ENCODE measurements at regions of chr3 and their contacts with region 1.

Region 1: DNA sequence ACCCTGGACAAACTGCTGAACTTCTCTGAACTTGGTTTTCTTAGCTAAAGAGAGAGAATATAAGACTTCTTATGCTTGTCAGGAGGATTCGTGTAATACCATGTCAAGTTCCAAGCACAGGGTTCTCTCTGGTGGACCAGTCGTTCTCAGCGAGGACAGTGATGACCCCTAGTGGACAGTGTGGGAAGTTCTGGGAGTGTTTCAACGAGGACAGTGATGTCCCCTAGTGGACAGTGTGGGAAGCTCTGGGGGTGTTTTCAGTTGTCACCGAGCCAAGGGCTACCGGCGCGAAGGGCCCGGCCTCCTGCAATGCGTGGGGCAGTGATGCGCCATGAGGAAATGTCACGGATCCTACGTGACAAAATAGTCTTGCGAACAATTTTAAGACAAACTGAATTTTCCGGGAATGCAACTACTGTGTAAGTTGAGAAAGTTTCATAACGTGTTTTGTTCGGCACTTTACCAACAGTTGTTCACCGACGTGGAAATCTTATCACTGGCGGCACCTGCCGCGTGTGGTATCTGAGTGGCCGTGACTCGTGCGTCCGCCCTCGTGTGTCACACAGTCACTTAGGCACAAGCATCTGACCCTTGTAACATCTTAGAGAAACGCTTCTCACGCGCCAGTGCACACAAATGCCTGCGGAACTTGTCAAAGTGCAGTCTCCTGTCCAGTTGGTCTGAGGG is 39.3 kb upstream of the MUC4 start:
- DNase-seq: peak; percentile 83
- H3K4me3 Mint-ChIP-seq: no peak overlapping the region
- H3K27ac Mint-ChIP-seq: peak overlapping the region; percentile 41
- H3K4me1 Mint-ChIP-seq: no peaks in the 10 kb centered on the region
- H3K27me3 Mint-ChIP-seq: peaks cover 5% of the 10 kb centered on the region

Region 2: DNA sequence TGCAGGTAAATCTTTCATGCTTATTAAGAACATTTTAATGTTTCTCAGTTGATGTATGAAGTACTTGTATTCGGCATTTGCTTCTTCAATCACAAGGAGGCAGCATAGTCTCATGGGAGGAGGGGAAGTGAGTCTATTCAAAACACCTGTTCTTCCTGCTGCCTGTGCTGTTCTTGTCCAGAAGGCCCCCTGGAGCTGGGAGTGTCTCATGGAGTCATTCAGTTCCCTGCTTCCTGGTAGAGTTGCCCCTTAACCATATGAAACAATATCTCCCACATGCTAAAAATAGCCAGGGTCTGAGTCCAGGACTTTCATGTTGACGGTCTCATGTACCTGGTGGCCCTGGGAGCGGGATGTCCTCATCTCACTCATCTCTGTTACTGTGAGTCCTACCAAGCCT is 292.4 kb before region 1 on chr3:
- intact Hi-C with region 1: loop called (anchors 2 kb)
- DNase-seq: no peak
- H3K4me3 Mint-ChIP-seq: no peak overlapping the region
- H3K27ac Mint-ChIP-seq: no peak overlapping the region
- H3K4me1 Mint-ChIP-seq: peaks cover 23% of the 10 kb centered on the region
- H3K27me3 Mint-ChIP-seq: peaks cover 3% of the 10 kb centered on the region

Region 3: DNA sequence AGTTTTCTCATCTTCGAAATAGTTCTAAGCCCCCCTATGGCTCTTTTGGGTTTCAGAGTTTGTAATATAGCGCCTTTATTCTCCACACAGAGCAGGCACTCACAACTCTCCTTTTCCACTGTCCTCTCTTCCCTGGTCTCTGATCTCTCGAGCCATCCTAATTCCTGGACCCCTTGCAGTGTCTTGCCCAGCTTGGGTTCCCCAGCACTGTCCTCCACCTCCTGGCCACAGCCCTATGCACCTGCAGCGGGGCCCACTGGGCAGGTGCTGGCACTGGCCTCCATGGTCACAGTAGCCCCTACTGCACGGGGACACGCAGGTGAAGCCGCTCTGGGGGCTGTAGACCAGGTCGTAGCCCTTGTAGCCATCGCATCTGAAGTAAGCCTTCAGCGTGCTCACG is 102.3 kb before region 1 on chr3:
- intact Hi-C with region 1: loop called (anchors 2 kb)
- DNase-seq: no peak
- H3K4me3 Mint-ChIP-seq: peak overlapping the region; percentile 1
- H3K27ac Mint-ChIP-seq: peak overlapping the region; percentile 36
- H3K4me1 Mint-ChIP-seq: peaks cover 14% of the 10 kb centered on the region
- H3K27me3 Mint-ChIP-seq: peaks cover 2% of the 10 kb centered on the region

Region 4: GRCh38 chr3:195815169-195815771 is 35.7 kb before region 1 on chr3:
- intact Hi-C with region 1: no loop called
- DNase-seq: no peak
- H3K4me3 Mint-ChIP-seq: no peak overlapping the region
- H3K27ac Mint-ChIP-seq: no peak overlapping the region
- H3K4me1 Mint-ChIP-seq: no peaks in the 10 kb centered on the region
- H3K27me3 Mint-ChIP-seq: peaks cover 2% of the 10 kb centered on the region